HepG2 (cell line): ENCODE measurements at regions of chr5 and their contacts with region 1.

Region 1: DNA sequence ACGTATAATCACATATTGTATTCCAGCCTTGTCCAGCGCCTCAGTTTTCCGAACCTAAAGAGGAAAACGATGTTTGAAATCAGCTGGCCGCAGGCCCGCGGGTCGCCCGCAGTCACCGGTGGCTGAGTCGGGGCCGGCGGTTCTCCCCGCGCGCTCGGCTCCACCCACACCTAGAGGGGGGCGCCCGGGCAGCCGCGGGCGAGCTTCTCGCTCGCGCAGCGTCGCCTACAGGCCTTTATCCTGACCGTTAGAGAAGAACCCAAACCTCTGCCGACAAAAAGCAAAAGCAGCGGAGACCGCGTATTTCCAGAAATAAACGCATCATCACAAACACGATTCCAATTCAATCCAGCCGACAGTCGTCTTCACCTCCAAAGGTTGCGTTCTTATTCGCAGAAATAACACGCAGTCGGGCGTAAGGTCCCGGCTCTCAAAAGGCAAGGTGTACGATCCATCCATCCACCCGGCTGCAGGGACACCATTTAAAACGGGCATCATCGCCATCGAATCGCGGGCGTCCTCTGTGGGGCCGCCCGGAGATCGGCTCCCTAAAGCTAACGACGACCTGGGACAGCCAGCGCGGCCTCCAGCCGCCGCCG is 680 bp upstream of the NIPBL start:
- DNase-seq: peak; percentile 59
- ATAC-seq: peak; percentile 86
- H3K4me3 ChIP-seq: peak overlapping the region; percentile 95 to 99 (median 99)
- H3K27ac ChIP-seq: peak overlapping the region; percentile 96
- H3K4me1 ChIP-seq: peaks cover 37% of the 10 kb centered on the region
- H3K27me3 ChIP-seq: peaks cover 0 to 3% of the 10 kb centered on the region in 2 experiments; a peak in 1 of 5 replicates
- CTCF ChIP-seq: peak; percentile 66
- EP300 ChIP-seq: no peak
- POLR2A ChIP-seq: peak in 1 of 2 experiments; percentile 9; a peak in 1 of 4 replicates
- RAD21 ChIP-seq: peak; percentile 25; the same call in 1 of the 2 replicates

Region 2: DNA sequence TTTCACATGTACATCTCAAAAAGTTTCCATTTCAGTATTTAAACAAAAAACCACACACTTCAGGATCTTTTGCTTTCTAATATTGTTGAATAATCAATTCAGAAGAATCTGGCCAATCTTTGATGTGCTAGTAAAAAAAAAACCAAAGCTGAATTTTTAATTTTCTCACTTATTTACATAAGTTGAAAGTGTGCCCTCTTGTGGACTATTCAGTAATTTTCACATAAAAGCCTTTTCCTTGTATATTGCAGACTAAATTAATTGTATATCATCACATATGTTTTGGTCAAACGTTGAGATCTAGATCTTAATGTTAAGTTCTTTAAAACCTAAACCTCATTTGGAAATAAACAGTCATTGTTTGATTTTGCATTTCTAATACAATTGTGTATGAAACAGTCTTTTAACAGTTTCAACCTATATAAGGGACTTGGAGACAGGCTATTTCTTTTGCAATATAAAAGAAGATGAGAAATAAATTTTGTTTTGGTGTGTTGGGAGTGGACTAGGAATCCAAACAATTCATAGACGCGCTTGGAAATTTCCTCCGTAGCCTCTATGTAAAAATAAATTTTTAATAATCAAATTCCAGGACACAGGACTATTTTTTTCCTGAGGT is 68.8 kb after region 1 on chr5:
- CTCF ChIA-PET with region 1: no interaction called
- POLR2A ChIA-PET with region 1: no interaction called
- in situ Hi-C with region 1: no loop called
- intact Hi-C with region 1: loop called (anchors 1 kb)
- DNase-seq: peak; percentile 49
- ATAC-seq: no peak
- H3K4me3 ChIP-seq: no peak overlapping the region
- H3K27ac ChIP-seq: no peak overlapping the region
- H3K4me1 ChIP-seq: peaks cover 8% of the 10 kb centered on the region
- H3K27me3 ChIP-seq: no peaks in the 10 kb centered on the region
- CTCF ChIP-seq: 0 out of 2 replicates have a peak, but pooled peaks have one; percentile 17
- EP300 ChIP-seq: no peak
- POLR2A ChIP-seq: no peak
- RAD21 ChIP-seq: no peak